ENCODE measurements at regions of chr12 and their contacts with region 1.

Region 1: GRCh38 chr12:110583137-110584059 is at the start of gene PPTC7:
- DNase-seq: peak; percentile 92 to 98
- H3K4me3 ChIP-seq: peak within 1 kb of the TSS; percentile 96 to 99
- H3K27ac ChIP-seq: peak within 1 kb of the TSS; percentile 85 to 96
- H3K4me1 ChIP-seq: peaks cover 8 to 38% of the 10 kb centered on the region in 2 donors
- H3K27me3 ChIP-seq: no peaks in the 10 kb centered on the region
- CTCF ChIP-seq: no peak
- total RNA-seq, gene PPTC7: 12.3 TPM

Region 2: GRCh38 chr12:110100315-110100970 is 483.0 kb before region 1 on chr12:
- intact Hi-C with region 1: loop called (anchors 10 kb)
- DNase-seq: peak in 1 of 2 donors; percentile 89
- H3K4me3 ChIP-seq: no peak overlapping the region
- H3K27ac ChIP-seq: peak overlapping the region; percentile 4 to 56
- H3K4me1 ChIP-seq: peaks cover 0 to 16% of the 10 kb centered on the region in 2 donors
- H3K27me3 ChIP-seq: no peaks in the 10 kb centered on the region
- CTCF ChIP-seq: peak; percentile 85 to 88 (median 87)

Region 3: DNA sequence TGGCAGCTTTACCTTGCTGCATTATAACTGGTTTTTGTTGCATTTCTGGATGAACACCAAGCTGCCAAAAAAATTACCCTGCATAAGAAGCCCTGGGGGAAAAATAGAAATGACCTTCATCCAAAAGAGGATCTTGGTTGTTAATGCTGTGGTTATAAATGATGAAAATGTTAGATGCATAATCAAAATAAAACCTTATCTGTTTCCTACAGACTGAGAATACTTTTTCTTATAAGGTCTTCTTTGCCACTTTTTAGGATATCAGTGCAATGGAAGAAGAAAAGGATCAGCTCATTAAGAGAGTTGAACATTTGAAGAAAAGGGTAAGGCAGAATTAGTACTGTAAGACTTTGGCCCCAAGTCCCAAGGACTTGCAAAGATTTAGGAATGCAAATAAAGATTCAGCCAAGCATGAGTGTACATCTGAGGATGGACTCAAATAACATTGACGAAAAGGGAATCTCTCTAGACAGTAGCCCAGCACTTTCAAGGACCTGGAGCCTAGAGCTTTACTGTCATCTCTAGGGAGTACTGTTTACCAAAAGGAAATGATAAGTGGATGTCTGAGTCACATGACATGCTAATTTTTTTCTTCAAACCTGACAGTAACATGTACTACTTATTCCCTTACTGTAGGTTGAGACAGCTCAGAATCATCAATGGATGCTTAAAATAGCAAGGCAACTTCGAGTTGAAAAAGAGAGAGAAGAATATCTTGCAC is 448.5 kb before region 1 on chr12:
- intact Hi-C with region 1: no loop called
- DNase-seq: no peak
- H3K4me3 ChIP-seq: no peak overlapping the region
- H3K27ac ChIP-seq: peak overlapping the region; percentile 21
- H3K4me1 ChIP-seq: peaks cover 0 to 13% of the 10 kb centered on the region in 2 donors
- H3K27me3 ChIP-seq: no peaks in the 10 kb centered on the region
- CTCF ChIP-seq: no peak

Region 4: GRCh38 chr12:110468212-110469048 is 115.0 kb before region 1 on chr12 and contains the starts of genes FAM216A and GPN3:
- intact Hi-C with region 1: loop called (anchors 1 kb)
- DNase-seq: peak; percentile 87 to 98
- H3K4me3 ChIP-seq: peak within 1 kb of the TSS; percentile 73 to 84
- H3K27ac ChIP-seq: peak within 1 kb of the TSS; percentile 88 to 92
- H3K4me1 ChIP-seq: peaks cover 6 to 17% of the 10 kb centered on the region in 2 donors
- H3K27me3 ChIP-seq: no peaks in the 10 kb centered on the region
- CTCF ChIP-seq: no peak
- total RNA-seq, gene FAM216A: 2.1 TPM
- total RNA-seq, gene GPN3: 5.6 TPM

Region 5: DNA sequence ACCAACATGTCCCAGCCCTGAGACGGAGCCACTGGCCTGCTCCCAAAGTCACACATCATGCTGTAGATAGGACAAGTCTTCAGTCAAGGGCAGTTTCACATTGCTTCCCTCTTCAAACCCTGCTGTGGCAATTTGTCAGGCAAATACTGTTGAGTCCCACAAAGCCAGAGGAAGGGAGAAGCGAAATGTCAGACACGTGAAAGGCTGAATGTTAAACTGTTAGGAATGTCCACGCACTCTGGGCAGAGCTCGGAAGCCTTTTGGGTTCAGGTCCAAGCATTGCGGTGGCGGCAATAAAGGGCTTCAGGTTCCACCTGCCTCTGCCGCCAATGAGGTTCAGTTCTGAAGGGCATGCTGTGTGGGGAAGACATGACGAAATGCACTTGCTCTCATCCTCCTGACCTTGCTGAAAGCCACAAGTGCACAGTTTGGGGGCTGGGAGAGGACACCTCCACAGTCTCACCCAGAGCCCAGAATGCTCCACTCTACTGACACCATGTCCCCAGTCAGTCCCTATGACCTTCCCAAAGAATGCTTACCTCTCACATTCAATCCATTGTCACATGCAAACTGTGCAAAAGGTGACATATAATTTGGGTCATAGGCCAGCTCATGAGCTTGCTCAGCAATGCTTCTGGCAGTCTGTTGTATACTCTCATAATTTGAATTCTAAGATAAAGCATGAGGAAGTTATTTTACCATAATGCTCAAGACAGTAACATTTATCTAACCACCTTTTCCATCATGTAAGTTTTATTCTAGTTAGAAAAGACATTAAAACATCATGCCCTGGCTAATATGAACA is 45.6 kb before region 1 on chr12:
- intact Hi-C with region 1: loop called (anchors 2 kb)
- DNase-seq: peak in 1 of 2 donors; percentile 81
- H3K4me3 ChIP-seq: peak overlapping the region; percentile 2 to 44
- H3K27ac ChIP-seq: peak overlapping the region; percentile 75 to 76
- H3K4me1 ChIP-seq: peaks cover 0 to 13% of the 10 kb centered on the region in 2 donors
- H3K27me3 ChIP-seq: no peaks in the 10 kb centered on the region
- CTCF ChIP-seq: no peak

Measured in ascending aorta (tissue), 2 donors.